ENCODE measurements at regions of chr12 and their contacts with region 1.

Region 1: GRCh38 chr12:55996715-55997534 is at the start of gene SUOX:
- DNase-seq: peak; percentile 98
- ATAC-seq: peak; percentile 99
- total RNA-seq, gene SUOX: 29.7 TPM

Region 2: GRCh38 chr12:56041552-56042429 is 44.9 kb after region 1 on chr12 and contains the start of gene RPS26:
- intact Hi-C with region 1: loop called (anchors 5 kb)
- DNase-seq: peak; percentile 96
- ATAC-seq: peak; percentile 98
- total RNA-seq, gene RPS26: 34.6 TPM

Measured in Right ventricle myocardium superior (tissue), 1 donor.